ENCODE measurements at regions of chr3 and their contacts with region 1.

Region 1: DNA sequence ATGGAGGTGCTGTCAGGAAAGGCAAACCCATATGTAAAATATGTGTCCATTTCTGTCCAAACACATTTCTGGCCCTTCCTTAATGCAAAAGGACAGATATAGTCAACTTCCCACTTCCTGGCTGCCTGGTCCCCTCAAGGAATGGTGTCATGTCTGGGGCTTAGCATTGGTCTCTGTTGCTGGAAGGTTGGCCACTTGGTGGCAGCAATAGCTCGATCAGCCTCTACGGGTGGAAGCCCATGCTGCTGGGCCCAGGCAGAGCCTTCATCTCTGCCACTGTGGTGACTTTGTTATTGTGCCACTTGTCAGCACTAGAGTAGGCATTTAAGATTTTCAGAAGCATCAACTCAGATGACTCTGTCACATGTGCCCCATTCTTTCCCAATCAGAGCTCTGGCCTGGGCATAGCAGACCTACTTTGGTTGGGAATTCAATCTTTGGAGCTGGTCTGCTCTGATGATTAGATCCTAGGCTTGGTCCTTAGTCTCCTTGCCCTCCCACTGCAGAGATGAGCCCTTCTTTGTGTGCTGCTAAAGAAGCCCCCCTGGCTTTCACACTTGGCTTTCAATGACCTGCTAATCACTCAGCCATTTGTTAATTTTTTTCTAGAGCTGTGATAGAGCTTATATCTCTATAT is 51.0 kb upstream of the SPSB4 start:
- DNase-seq: peak; percentile 72
- ATAC-seq: peak; percentile 88
- H3K4me3 Mint-ChIP-seq: no peak overlapping the region
- H3K27ac Mint-ChIP-seq: no peak overlapping the region
- H3K4me1 Mint-ChIP-seq: peaks cover 6% of the 10 kb centered on the region
- H3K27me3 Mint-ChIP-seq: peaks cover 1% of the 10 kb centered on the region
- CTCF ChIP-seq: peak; percentile 81

Region 2: DNA sequence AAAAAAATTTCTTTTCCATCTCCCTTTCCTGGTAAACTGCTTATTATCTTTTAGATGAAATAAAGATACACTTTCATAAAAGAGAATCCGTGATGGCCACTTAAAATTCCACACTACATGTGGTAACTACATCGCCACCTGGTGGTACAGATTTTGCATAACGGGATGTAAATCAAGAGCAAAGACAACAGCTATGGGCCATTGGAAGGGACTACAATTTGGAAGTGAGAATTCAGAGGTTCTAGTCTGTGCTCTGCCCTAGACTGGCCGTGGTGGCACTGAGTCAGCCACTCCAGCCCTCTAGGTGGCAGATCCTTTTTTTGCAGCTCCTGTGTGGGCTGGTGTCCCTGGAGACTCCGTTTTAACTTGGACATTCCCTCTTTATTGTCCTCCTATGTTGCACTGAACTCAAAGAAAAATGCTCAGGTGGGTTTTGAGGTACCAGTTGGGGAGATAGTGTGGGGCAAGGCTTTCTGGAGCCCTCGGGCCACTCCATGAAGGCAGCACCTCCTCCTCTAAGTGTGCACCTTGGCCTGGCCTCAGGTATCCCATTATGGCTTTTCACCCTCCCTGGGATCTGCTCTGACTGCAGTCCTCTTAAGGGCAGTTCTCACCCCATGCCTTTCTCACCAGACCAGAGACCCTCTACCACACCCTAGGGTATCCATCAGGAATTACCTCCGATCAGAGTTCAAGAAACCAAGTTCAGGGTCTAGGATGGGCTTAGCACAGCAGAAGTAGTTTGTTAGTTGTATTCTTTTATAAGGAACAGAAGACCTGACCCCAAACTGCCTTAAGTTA is 105.9 kb after region 1 on chr3:
- CTCF ChIA-PET with region 1: interaction called, 19 read pairs
- POLR2A ChIA-PET with region 1: interaction called, 3 read pairs
- intact Hi-C with region 1: loop called (anchors 5 kb)
- DNase-seq: peak; percentile 87
- ATAC-seq: peak; percentile 85
- H3K4me3 Mint-ChIP-seq: no peak overlapping the region
- H3K27ac Mint-ChIP-seq: no peak overlapping the region
- H3K4me1 Mint-ChIP-seq: no peaks in the 10 kb centered on the region
- H3K27me3 Mint-ChIP-seq: no peaks in the 10 kb centered on the region
- CTCF ChIP-seq: peak; percentile 74

Region 3: DNA sequence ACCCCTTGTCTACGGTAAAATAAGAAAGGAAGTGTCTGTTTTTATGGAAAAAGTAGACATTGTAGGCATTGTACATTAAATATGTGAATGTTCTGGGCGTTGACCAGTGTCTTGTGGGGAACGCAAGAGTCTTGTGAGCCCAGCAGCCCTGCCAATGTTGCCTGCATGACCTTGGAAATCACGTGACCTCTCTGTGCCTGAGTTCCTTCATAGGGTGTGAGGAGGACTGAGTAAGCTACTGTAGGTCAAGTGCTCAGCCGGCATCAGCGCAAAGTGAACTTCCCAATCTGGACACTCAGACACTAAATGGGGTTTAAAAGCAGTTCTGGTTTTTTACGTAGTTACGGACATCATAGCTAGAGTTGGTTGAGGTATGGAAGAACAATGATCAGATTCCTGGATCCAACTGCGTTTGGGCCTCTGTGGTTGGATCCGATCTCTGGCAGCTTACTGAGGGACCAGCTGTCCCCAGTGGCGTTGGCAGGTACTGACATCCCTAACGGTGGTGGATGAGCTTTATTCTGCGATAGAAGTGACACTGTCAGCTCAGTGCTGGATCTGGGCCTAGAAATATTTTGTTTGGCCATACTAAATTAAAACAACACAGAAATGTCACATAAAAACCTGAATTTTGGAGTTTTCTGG is 114.8 kb after region 1 on chr3:
- CTCF ChIA-PET with region 1: interaction called, 17 read pairs
- POLR2A ChIA-PET with region 1: no interaction called
- intact Hi-C with region 1: no loop called
- DNase-seq: no peak
- ATAC-seq: no peak
- H3K4me3 Mint-ChIP-seq: no peak overlapping the region
- H3K27ac Mint-ChIP-seq: no peak overlapping the region
- H3K4me1 Mint-ChIP-seq: no peaks in the 10 kb centered on the region
- H3K27me3 Mint-ChIP-seq: peaks cover 6% of the 10 kb centered on the region
- CTCF ChIP-seq: peak; percentile 43

Measured in activated CD8-positive, alpha-beta T cell treated with anti-CD3 and anti-CD28 coated beads for 36 hours (primary cell).